HEK293 (cell line): ENCODE measurements at regions of chr4 and their contacts with region 1.

Region 1: GRCh38 chr4:1351854-1352633 is 5.0 kb downstream of the UVSSA start:
- H3K4me3 ChIP-seq: no peak overlapping the region
- H3K27ac ChIP-seq: no peak overlapping the region
- H3K4me1 ChIP-seq: no peaks in the 10 kb centered on the region
- CTCF ChIP-seq: peak; percentile 74

Region 2: DNA sequence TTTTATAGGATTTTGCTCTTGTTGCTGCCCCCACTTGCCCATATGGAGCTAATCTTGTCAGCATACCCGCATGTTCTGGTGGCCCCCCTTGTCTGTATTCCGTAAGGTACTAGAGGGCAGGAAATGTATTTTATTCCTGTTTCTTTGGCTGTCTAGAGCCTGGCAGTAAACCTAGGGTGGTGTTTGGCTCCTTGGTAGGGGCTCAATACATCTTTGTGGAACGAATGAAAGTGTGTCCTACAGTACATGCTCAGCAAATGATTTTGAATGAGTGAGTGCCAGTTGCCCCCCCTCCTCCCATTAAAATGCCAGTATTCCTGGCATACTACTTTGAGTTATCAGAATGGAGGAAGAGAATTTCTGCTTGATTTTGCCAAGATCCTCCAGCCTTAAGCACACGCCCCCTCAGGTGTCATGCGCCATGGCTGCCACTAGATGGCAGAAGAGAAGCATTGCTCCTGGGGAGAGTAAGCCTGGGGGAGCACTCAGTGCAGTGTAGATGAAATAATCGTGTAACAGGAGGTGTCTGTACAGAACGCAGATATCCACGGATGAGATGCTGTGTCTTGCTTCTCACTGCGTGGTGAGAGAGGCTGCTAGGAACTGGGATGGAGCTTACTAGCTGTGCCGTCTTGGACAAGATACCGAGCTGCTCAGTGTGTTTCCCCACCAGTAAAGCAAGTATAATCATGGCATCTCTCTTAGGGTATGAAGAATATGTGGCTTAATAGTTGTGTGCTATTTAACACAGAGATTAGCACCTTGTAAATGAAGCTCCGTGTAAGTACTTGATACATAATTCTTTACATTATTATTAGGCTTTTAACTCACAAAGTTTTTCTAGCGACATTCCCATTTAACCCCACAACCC is 221.5 kb before region 1 on chr4:
- CTCF ChIA-PET with region 1: interaction called, 10 read pairs
- POLR2A ChIA-PET with region 1: no interaction called
- H3K4me3 ChIP-seq: no peak overlapping the region
- H3K27ac ChIP-seq: no peak overlapping the region
- H3K4me1 ChIP-seq: no peaks in the 10 kb centered on the region
- CTCF ChIP-seq: peak; percentile 77

Region 3: DNA sequence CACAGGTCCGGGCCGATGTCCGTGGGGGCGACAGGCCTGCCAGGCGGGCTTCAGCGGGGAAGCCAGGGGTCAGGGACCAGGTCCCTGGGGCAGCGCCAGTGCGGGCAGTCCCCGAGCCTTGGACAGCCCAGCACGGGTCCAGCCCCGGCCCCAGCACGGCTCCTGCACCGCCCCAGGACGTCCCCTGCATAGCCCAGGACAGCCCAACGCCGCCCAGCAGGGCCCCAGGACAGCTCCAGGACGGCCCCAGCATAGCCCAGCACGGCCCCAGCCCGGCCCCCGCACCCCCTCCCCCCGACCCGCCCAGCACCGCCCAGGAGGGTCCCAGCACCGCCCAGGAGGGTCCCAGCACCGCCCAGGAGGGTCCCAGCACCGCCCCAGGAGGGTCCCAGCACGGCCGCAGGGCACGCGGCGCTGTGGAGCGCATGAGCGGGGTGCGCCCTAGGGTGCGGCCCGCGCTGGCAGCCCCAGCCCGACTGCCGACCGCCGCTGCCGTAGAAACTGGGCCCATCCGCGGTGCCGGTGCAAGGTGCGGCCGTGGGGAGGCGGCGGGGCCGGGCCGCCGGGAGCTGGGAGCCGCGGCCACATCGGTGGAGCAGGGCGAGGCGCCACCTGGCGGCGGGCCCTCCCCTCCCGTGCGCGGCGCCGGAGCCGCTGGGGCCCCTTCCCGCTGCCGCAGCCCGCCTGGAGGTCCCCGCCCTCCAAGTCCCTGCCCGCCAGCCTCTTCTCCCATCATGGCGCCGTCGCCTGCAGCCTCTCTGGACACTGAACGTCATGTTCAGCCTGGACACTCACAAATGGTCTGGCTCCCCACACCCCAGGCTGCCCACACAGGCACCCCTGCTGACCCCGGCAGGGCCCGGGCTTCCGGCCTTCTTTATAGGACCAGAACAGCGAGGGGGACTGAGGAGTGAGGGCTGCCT is 161.0 kb after region 1 on chr4:
- CTCF ChIA-PET with region 1: interaction called, 13 read pairs
- POLR2A ChIA-PET with region 1: no interaction called
- H3K4me3 ChIP-seq: peak overlapping the region; percentile 28
- H3K27ac ChIP-seq: no peak overlapping the region
- H3K4me1 ChIP-seq: no peaks in the 10 kb centered on the region; the same call in 1 of the 2 replicates
- CTCF ChIP-seq: no peak

Region 4: DNA sequence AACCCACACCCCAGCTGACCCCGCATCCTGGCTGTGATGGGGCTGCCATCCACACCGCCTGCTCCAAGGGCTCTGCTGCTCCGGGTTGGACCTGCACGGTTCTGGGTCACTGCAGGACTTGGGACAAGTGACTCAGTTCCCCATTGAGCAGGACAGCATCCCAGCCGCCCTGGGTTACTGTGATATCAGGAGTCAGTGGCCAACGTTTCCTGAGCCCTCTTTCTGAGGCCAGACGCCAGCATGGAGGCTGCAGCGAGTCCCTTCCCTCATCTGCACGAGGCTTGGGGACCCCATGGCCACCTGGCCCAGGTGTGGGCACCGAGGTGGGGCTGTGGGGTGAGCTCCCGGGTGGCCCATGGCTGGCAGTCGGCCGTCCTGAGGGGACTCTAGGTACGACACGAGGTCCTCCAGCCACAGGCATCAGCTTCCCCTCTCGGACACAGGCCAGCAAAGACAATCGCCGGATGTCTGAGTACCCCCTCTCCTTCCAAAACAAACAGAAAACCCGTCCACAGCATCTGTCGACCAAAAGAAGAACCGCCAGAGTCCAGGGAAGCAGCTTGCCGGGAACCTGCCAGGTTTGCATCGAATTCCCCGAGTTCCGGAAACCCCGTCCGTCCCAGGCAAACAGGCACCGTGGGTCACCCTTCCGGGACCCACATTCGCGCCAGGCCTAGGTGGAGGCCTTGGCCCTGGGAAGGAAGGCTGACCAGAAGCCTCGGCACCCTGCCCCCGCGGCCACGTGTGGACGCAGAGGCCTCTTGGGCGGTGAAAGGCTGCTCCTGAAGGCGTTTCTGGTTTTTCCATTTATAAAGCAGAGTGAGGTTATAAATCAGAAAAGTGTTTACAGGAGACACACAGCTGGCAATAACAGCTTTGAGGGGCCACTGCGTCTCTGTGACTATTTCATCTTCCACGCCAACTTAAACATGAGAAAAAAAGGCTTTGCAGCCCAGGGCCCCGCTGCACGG is 196.1 kb after region 1 on chr4:
- CTCF ChIA-PET with region 1: interaction called, 14 read pairs
- POLR2A ChIA-PET with region 1: no interaction called
- H3K4me3 ChIP-seq: no peak overlapping the region
- H3K27ac ChIP-seq: no peak overlapping the region
- H3K4me1 ChIP-seq: no peaks in the 10 kb centered on the region
- CTCF ChIP-seq: no peak

Region 5: DNA sequence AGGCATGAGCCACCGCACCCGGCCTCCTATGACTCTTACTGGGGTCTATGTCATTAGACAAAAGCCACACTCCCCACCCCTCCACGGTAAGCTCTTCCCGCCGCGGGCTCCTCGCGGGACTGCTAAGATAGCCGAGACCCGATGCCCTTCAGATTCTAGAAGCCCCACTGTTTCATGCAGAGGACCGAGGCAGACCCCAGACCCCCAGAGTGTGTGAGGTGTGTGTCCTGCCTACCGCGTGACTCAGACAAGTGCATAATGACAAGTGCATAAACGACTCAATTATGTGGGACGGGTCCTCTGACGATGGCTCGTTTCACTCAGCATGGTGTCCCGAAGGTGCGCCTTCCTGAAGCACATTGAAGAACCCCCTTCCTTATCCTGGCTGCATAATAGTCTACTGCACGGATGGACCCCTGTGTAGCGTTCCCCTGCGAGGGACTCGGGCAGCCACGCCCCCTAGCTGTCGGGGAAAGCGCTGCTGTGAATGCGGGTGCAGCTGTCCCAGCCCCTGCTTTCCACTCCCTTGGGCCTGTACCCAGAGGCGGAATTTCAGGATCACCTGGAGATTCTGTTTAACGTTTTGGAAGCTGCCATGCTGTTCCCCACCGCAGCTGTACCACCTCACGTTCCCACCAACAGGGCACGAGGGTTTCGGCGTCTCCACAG is 254.4 kb after region 1 on chr4:
- CTCF ChIA-PET with region 1: no interaction called
- POLR2A ChIA-PET with region 1: no interaction called
- H3K4me3 ChIP-seq: no peak overlapping the region
- H3K27ac ChIP-seq: no peak overlapping the region
- H3K4me1 ChIP-seq: no peaks in the 10 kb centered on the region
- CTCF ChIP-seq: no peak